ENCODE measurements at regions of chr1 and their contacts with region 1.

Region 1: DNA sequence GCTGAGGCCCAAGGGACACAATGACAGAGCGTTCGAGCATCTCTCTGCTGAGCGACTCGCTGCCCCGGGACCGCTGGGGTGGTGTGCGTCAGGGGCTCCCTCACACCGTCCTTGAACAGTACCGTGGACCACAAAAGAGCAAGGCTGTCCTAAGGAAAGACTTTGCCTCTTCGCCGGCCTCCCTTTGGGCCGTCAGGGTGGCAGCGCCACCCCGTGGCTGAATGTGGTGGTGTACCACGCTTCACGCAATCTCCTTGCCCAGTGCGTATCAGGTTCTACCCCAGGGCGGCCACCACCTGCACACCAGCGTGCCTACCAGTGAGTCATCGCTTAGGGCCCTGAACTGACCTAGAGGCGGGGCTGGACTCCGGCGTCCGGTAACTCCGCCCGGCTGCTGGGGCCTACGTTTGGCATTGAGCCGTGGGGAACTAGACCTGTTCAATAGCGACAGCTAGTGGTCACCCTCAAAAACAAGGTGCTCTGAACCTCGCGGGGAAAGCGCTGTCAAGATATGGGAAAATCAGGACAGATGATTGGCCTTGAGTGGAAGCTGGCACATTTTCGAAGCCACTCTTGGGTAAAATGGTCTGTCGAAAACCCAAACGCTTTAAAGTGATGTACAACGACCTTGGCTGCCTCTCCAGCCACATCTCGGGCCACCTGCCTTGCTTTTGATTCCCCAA is 8.1 kb upstream of the TRAF3IP3 start:
- DNase-seq: peak; percentile 65 to 93 (median 83)
- ATAC-seq: peak; percentile 84
- H3K4me3 ChIP-seq: peak overlapping the region; percentile 46 to 56
- H3K4me3 Mint-ChIP-seq: peak overlapping the region; percentile 93
- H3K27ac ChIP-seq: peak overlapping the region; percentile 54 to 67
- H3K27ac Mint-ChIP-seq: peak overlapping the region; percentile 97
- H3K4me1 ChIP-seq: peaks cover 46% of the 10 kb centered on the region
- H3K4me1 Mint-ChIP-seq: peaks cover 52% of the 10 kb centered on the region
- H3K27me3 ChIP-seq: no peaks in the 10 kb centered on the region
- H3K27me3 Mint-ChIP-seq: no peaks in the 10 kb centered on the region
- CTCF ChIP-seq: peak; percentile 97

Region 2: DNA sequence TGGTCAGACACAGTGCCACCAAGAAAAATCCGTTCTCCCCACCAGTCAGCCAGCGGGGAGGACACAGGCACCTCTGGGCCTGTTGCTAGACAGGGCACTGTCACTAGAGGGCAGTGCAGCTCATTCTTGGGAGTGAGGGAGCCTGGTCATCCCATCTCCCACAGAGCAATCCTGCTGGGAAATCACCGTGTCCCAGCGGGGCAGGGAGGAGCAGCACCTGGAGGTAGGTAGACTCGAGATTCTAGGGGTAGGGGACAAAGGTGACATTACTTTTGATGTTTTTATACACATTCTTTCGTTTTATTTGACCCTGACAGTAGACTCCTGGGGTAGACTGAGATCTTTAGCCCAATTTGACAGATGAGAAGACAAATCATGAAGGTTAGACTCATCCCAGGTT is 170.9 kb before region 1 on chr1:
- CTCF ChIA-PET with region 1: interaction called, 9 read pairs
- POLR2A ChIA-PET with region 1: no interaction called
- intact Hi-C with region 1: loop called (anchors 1 to 2 kb)
- DNase-seq: peak; percentile 24 to 71 (median 63)
- ATAC-seq: peak; percentile 75
- H3K4me3 ChIP-seq: no peak overlapping the region
- H3K4me3 Mint-ChIP-seq: no peak overlapping the region
- H3K27ac ChIP-seq: no peak overlapping the region
- H3K27ac Mint-ChIP-seq: no peak overlapping the region
- H3K4me1 ChIP-seq: no peaks in the 10 kb centered on the region
- H3K4me1 Mint-ChIP-seq: no peaks in the 10 kb centered on the region
- H3K27me3 ChIP-seq: no peaks in the 10 kb centered on the region
- H3K27me3 Mint-ChIP-seq: peaks cover 8% of the 10 kb centered on the region
- CTCF ChIP-seq: peak; percentile 82

Region 3: GRCh38 chr1:209692745-209693504 is 54.8 kb before region 1 on chr1:
- CTCF ChIA-PET with region 1: interaction called, 11 read pairs
- POLR2A ChIA-PET with region 1: no interaction called
- intact Hi-C with region 1: loop called (anchors 1 to 2 kb)
- DNase-seq: peak; percentile 40 to 77 (median 66)
- ATAC-seq: peak; percentile 52
- H3K4me3 ChIP-seq: no peak overlapping the region
- H3K4me3 Mint-ChIP-seq: no peak overlapping the region
- H3K27ac ChIP-seq: no peak overlapping the region
- H3K27ac Mint-ChIP-seq: no peak overlapping the region
- H3K4me1 ChIP-seq: no peaks in the 10 kb centered on the region
- H3K4me1 Mint-ChIP-seq: peaks cover 10% of the 10 kb centered on the region
- H3K27me3 ChIP-seq: no peaks in the 10 kb centered on the region
- H3K27me3 Mint-ChIP-seq: no peaks in the 10 kb centered on the region
- CTCF ChIP-seq: peak; percentile 91

Region 4: DNA sequence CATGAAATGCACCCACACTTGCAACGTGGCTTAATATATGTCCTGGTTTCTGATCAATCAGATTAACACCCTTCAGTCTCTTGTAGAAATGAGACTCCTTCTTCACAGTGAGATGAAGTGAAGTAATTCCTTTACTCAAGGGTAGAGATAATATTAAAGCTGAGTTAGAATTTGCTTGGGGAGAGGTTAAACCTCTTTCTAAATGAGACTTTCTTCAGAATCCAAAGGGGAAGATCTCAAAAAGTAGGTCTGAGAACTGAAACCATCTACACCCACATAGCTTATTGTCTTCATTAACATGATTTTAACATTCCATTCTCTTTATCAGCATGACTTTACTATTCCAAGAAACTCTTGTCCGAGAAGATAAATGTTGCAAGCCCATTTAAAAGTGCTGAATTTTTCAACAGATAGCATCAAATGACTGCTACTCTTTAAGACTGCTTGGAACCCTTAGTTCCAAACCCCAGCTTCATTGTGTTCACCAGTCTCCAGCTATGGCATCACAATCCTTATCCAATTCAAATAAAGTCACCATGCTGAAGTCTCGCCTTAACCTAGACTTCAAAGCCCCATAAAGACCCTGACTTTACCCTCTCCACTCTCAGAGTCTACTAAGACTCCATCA is 11.1 kb before region 1 on chr1:
- CTCF ChIA-PET with region 1: interaction called, 26 read pairs
- POLR2A ChIA-PET with region 1: no interaction called
- intact Hi-C with region 1: no loop called
- DNase-seq: no peak
- ATAC-seq: no peak
- H3K4me3 ChIP-seq: no peak overlapping the region
- H3K4me3 Mint-ChIP-seq: no peak overlapping the region
- H3K27ac ChIP-seq: no peak overlapping the region
- H3K27ac Mint-ChIP-seq: no peak overlapping the region
- H3K4me1 ChIP-seq: no peaks in the 10 kb centered on the region
- H3K4me1 Mint-ChIP-seq: peaks cover 2% of the 10 kb centered on the region
- H3K27me3 ChIP-seq: no peaks in the 10 kb centered on the region
- H3K27me3 Mint-ChIP-seq: peaks cover 3% of the 10 kb centered on the region
- CTCF ChIP-seq: no peak

Region 5: DNA sequence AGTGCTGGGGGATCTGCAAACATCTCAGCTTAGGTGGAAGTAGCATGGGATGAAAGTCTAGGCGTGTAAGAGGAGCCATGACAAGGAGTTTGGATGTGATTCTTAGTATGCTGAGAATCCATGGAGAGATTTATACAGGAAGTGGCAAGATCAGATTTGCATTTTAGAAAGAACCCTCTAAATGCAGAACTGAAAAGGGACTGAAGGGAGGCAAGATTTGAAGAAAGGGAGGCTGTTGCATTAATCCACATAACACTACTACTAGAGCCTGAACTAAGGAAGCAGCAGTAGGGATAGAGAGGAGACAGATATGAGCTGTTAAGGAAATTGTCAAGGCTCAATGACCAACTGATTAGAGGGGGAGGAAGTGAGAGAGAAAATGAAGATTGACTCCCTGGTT is 26.9 kb after region 1 on chr1:
- CTCF ChIA-PET with region 1: interaction called, 88 read pairs
- POLR2A ChIA-PET with region 1: interaction called, 377 read pairs
- intact Hi-C with region 1: loop called in 1 of 2 experiments (anchors 1 kb)
- DNase-seq: peak in 1 of 9 experiments; percentile 7
- ATAC-seq: no peak
- H3K4me3 ChIP-seq: no peak overlapping the region
- H3K4me3 Mint-ChIP-seq: peak overlapping the region; percentile 13
- H3K27ac ChIP-seq: peak overlapping the region in 1 of 2 experiments; percentile 49
- H3K27ac Mint-ChIP-seq: no peak overlapping the region
- H3K4me1 ChIP-seq: peaks cover 49% of the 10 kb centered on the region
- H3K4me1 Mint-ChIP-seq: peaks cover 46% of the 10 kb centered on the region
- H3K27me3 ChIP-seq: no peaks in the 10 kb centered on the region
- H3K27me3 Mint-ChIP-seq: no peaks in the 10 kb centered on the region
- CTCF ChIP-seq: no peak

Region 6: GRCh38 chr1:209875515-209875914 is 127.8 kb after region 1 on chr1:
- CTCF ChIA-PET with region 1: no interaction called
- POLR2A ChIA-PET with region 1: no interaction called
- intact Hi-C with region 1: no loop called
- DNase-seq: no peak
- ATAC-seq: no peak
- H3K4me3 ChIP-seq: no peak overlapping the region
- H3K4me3 Mint-ChIP-seq: no peak overlapping the region
- H3K27ac ChIP-seq: no peak overlapping the region
- H3K27ac Mint-ChIP-seq: no peak overlapping the region
- H3K4me1 ChIP-seq: no peaks in the 10 kb centered on the region
- H3K4me1 Mint-ChIP-seq: no peaks in the 10 kb centered on the region
- H3K27me3 ChIP-seq: peaks cover 2 to 5% of the 10 kb centered on the region in 2 experiments
- H3K27me3 Mint-ChIP-seq: peaks cover 40% of the 10 kb centered on the region
- CTCF ChIP-seq: no peak

Measured in CD8-positive, alpha-beta T cell (primary cell).